Activated T-helper 2 cell treated with anti-CD3 and anti-CD28 coated beads, Interferon-gamma antibody, Interleukin-2, Interleukin-4, amounts not matched to agents 10 μg/mL and 5 μg/mL and 100 μg/mL, durations not matched to agents 14 hours and 24 hours and 36 hours (primary cell): ENCODE measurements at regions of chr10 and their contacts with region 1.

Region 1: DNA sequence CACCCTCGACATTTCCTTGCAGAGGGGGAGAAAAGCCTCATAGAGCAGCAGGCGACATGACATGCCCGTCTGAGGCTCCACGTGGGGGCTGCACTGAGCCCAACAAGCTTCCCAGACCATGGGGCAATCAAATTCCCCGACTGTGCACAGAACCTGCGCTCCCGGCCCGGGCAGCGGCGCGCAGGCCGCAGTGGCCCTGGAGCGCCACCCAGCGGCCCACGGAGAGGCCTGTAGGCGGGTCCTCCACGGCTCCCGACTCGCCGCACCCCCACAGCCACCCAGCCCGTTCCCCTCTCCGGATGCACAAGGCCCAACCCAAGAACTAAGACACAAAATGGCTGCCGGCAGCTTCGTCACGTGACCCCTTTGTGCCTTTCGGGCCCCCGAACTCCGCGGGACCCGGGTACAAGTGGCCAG is 816 bp downstream of the EPC1 start:
- DNase-seq: peak; percentile 93
- H3K4me3 Mint-ChIP-seq: peak overlapping the region; percentile 92
- H3K27ac Mint-ChIP-seq: peak overlapping the region; percentile 99
- H3K4me1 Mint-ChIP-seq: peaks cover 50% of the 10 kb centered on the region
- H3K27me3 Mint-ChIP-seq: no peaks in the 10 kb centered on the region

Region 2: DNA sequence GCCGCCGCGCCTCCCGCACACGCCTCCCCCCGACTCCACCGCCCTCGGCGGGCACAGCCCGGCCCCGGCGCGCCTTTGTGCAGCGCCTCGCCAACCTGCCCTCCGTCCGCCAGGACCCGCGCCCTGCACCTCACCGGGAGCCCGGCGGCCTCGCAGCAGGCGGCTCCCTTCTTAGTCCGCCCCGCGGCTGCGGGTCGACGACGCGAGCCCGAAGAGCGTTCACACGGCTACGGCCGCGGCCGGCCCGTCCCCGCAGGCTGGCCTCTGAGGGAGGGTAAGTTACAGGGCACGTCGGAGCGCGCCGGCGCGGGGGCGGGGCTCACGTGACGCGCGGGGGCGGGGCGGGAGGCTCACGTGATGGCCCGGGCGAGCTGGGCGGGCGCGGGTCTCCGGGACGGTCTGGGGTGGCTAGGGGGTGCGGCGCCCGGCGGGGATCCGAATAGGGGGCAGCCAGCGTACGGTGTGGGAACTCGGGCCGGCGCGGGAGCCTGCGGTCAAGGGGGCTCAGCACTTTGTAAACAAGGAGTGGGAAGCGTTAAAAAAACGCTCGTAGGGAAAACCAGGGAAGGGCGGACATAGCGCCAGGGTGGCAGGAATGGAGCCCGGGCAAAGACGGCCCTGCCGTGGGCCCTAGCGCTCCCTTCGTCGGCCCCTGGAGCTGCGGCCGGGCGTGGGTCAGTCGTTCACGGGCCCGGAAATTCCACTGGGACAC is 417.4 kb before region 1 on chr10 and contains the start of gene ARHGAP12:
- intact Hi-C with region 1: loop called (anchors 10 kb)
- DNase-seq: peak; percentile 66
- H3K4me3 Mint-ChIP-seq: peak within 1 kb of the TSS; percentile 83
- H3K27ac Mint-ChIP-seq: peak within 1 kb of the TSS; percentile 67
- H3K4me1 Mint-ChIP-seq: peaks cover 39% of the 10 kb centered on the region
- H3K27me3 Mint-ChIP-seq: peaks cover 21% of the 10 kb centered on the region
- total RNA-seq, gene ARHGAP12: 2.7 and 3.5 TPM in 2 replicates

Region 3: GRCh38 chr10:32149252-32149955 is 196.7 kb before region 1 on chr10:
- intact Hi-C with region 1: loop called (anchors 5 kb)
- DNase-seq: peak; percentile 53
- H3K4me3 Mint-ChIP-seq: peak overlapping the region; percentile 10
- H3K27ac Mint-ChIP-seq: peak overlapping the region; percentile 94
- H3K4me1 Mint-ChIP-seq: peaks cover 48% of the 10 kb centered on the region
- H3K27me3 Mint-ChIP-seq: no peaks in the 10 kb centered on the region

Region 4: DNA sequence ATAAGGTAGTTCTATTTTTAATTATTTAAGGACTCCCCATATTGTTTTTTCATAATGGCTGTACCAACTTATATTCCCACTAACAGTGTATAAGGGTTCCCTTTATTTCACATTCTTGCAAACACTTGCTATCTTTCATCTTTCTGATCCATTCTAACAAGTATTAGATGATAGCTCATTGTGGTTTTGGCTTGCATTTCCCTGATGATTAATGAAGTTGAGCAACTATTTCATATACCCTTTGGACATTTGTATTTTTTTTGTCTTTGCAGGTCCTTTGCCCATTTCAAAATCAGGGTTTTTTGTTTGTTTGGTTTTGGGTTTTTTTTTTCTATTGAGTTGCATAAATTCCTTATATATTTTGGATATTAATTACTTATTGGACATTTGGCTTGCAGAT is 106.4 kb before region 1 on chr10:
- intact Hi-C with region 1: loop called (anchors 5 kb)
- DNase-seq: no peak
- H3K4me3 Mint-ChIP-seq: no peak overlapping the region
- H3K27ac Mint-ChIP-seq: no peak overlapping the region
- H3K4me1 Mint-ChIP-seq: peaks cover 12% of the 10 kb centered on the region
- H3K27me3 Mint-ChIP-seq: no peaks in the 10 kb centered on the region

Region 5: GRCh38 chr10:32263300-32263699 is 82.8 kb before region 1 on chr10:
- intact Hi-C with region 1: no loop called
- DNase-seq: no peak
- H3K4me3 Mint-ChIP-seq: no peak overlapping the region
- H3K27ac Mint-ChIP-seq: no peak overlapping the region
- H3K4me1 Mint-ChIP-seq: no peaks in the 10 kb centered on the region
- H3K27me3 Mint-ChIP-seq: no peaks in the 10 kb centered on the region

Region 6: DNA sequence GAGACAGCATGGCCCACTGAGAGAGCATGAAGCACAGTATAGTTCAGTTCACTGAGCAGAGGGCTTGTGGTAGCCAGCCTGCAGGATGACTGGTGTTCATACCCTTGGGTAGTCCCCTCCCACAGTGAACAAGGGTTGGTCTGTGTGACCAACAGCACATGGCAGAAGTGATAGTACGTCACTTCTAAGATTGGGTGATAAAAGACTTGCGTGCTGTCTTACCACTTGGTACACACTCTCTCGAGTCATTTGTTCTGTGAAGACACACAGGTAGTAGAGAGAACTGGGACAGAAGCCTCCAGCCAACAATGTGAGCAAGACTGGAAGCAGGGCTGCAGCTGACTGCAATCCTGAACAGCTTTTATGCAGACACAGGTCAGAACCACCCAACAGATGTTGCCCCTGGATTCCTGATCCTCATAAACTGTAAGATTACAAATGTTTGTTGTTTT is 13.8 kb before region 1 on chr10:
- intact Hi-C with region 1: loop called (anchors 1 kb)
- DNase-seq: peak; percentile 80
- H3K4me3 Mint-ChIP-seq: peak overlapping the region; percentile 85
- H3K27ac Mint-ChIP-seq: peak overlapping the region; percentile 95
- H3K4me1 Mint-ChIP-seq: peaks cover 76% of the 10 kb centered on the region
- H3K27me3 Mint-ChIP-seq: no peaks in the 10 kb centered on the region

Region 7: GRCh38 chr10:32378363-32379317 is 32.5 kb after region 1 on chr10:
- intact Hi-C with region 1: loop called (anchors 1 kb)
- DNase-seq: peak; percentile 88
- H3K4me3 Mint-ChIP-seq: no peak overlapping the region
- H3K27ac Mint-ChIP-seq: no peak overlapping the region
- H3K4me1 Mint-ChIP-seq: peaks cover 20% of the 10 kb centered on the region
- H3K27me3 Mint-ChIP-seq: no peaks in the 10 kb centered on the region

Region 8: GRCh38 chr10:32511599-32511998 is 165.5 kb after region 1 on chr10:
- intact Hi-C with region 1: no loop called
- DNase-seq: no peak
- H3K4me3 Mint-ChIP-seq: no peak overlapping the region
- H3K27ac Mint-ChIP-seq: no peak overlapping the region
- H3K4me1 Mint-ChIP-seq: no peaks in the 10 kb centered on the region
- H3K27me3 Mint-ChIP-seq: no peaks in the 10 kb centered on the region

Region 9: GRCh38 chr10:33025039-33025438 is 678.9 kb after region 1 on chr10:
- intact Hi-C with region 1: no loop called
- DNase-seq: no peak
- H3K4me3 Mint-ChIP-seq: no peak overlapping the region
- H3K27ac Mint-ChIP-seq: no peak overlapping the region
- H3K4me1 Mint-ChIP-seq: peaks cover 4% of the 10 kb centered on the region
- H3K27me3 Mint-ChIP-seq: peaks cover 12% of the 10 kb centered on the region